ENCODE measurements at regions of chr16 and their contacts with region 1.

Region 1: GRCh38 chr16:24729985-24730815 is 749 bp downstream of the TNRC6A start:
- DNase-seq: no peak
- H3K4me3 ChIP-seq: peak overlapping the region; percentile 87
- H3K27ac ChIP-seq: peak overlapping the region; percentile 70
- H3K27me3 ChIP-seq: no peaks in the 10 kb centered on the region
- CTCF ChIP-seq: no peak

Region 2: DNA sequence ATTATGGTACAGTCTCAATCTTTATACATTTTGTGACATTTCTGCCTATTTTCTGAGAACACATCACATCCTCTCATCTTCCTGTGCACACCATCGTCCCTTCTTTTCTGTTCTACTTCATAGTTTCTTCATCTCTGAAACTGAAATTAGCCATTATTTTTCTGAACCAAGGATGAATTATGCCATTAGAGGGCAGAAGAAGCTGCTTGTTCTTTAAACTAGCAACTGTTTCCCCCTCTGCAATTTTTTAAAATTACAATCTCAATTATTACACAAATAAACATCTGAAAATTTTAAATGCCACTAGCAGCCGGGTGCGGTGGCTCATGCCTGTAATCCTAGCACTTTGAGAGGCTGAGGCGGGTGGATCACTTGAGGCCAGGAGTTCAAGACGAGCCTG is 149.5 kb before region 1 on chr16:
- CTCF ChIA-PET with region 1: interaction called, 11 read pairs
- POLR2A ChIA-PET with region 1: no interaction called
- DNase-seq: peak; percentile 10
- H3K4me3 ChIP-seq: no peak overlapping the region
- H3K27ac ChIP-seq: no peak overlapping the region
- H3K27me3 ChIP-seq: no peaks in the 10 kb centered on the region
- CTCF ChIP-seq: peak; percentile 64

Region 3: GRCh38 chr16:24612656-24613055 is 117.5 kb before region 1 on chr16:
- CTCF ChIA-PET with region 1: interaction called, 11 read pairs
- POLR2A ChIA-PET with region 1: no interaction called
- DNase-seq: no peak
- H3K4me3 ChIP-seq: no peak overlapping the region
- H3K27ac ChIP-seq: no peak overlapping the region
- H3K27me3 ChIP-seq: peaks cover 11% of the 10 kb centered on the region
- CTCF ChIP-seq: no peak

Region 4: GRCh38 chr16:25177831-25178688 is 447.9 kb after region 1 on chr16:
- CTCF ChIA-PET with region 1: no interaction called
- POLR2A ChIA-PET with region 1: no interaction called
- DNase-seq: no peak
- H3K4me3 ChIP-seq: no peak overlapping the region
- H3K27ac ChIP-seq: no peak overlapping the region
- H3K27me3 ChIP-seq: no peaks in the 10 kb centered on the region
- CTCF ChIP-seq: no peak

Measured in AG04450 (cell line).